ENCODE measurements at regions of chr19 and their contacts with region 1.

Region 1: GRCh38 chr19:17747205-17748098 is 3.8 kb upstream of the FCHO1 start:
- DNase-seq: peak; percentile 94 to 96 (median 94)
- H3K4me3 ChIP-seq: peak overlapping the region in 1 of 2 donors; percentile 59
- H3K4me3 Mint-ChIP-seq: peak overlapping the region; percentile 73 to 96 (median 94)
- H3K27ac ChIP-seq: peak overlapping the region; percentile 52
- H3K27ac Mint-ChIP-seq: peak overlapping the region; percentile 31 to 90 (median 74)
- H3K4me1 ChIP-seq: peaks cover 44% of the 10 kb centered on the region
- H3K4me1 Mint-ChIP-seq: peaks cover 28 to 56% (median 41%) of the 10 kb centered on the region in 4 donors
- H3K27me3 ChIP-seq: no peaks in the 10 kb centered on the region
- H3K27me3 Mint-ChIP-seq: no peaks in the 10 kb centered on the region

Region 2: DNA sequence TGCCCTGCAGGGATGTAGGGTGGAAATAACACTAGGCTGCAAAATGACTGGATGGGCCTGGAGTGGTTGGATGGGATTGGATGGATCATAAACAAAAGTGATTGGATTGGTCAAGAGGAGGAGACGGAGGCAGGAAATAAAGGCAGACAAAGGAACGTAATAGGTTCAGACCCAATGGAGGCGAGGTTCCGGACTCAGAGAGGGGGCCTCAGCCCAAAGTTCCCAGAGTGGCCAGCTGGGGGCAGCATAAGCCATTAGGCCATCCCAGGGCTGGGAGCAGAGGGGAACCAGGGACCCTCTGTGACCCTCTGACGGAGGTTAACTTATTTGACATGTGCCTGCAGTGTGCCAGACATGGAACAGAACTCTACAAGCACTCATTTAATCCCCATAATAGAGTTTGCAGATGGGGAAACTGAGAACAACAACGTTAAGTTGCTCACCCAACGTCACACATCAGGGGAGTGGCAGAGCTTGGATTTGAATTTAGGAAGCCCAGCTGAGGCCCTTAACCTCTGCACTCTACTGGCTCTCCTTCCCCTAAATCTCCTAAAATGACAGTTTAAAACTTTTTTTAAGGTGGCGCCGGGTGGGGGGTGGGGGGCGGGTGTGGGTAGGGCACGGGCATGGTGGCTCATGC is 43.5 kb before region 1 on chr19:
- CTCF ChIA-PET with region 1: interaction called, 11 read pairs
- POLR2A ChIA-PET with region 1: no interaction called
- intact Hi-C with region 1: no loop called
- DNase-seq: peak; percentile 62 to 71 (median 66)
- H3K4me3 ChIP-seq: no peak overlapping the region
- H3K4me3 Mint-ChIP-seq: no peak overlapping the region
- H3K27ac ChIP-seq: no peak overlapping the region
- H3K27ac Mint-ChIP-seq: peak overlapping the region in 2 of 7 donors; percentile 5 to 78
- H3K4me1 ChIP-seq: no peaks in the 10 kb centered on the region
- H3K4me1 Mint-ChIP-seq: peaks cover 0 to 2% (median 0%) of the 10 kb centered on the region in 4 donors
- H3K27me3 ChIP-seq: no peaks in the 10 kb centered on the region
- H3K27me3 Mint-ChIP-seq: peaks cover 3 to 10% of the 10 kb centered on the region in 2 donors

Region 3: GRCh38 chr19:17766543-17767131 is 19.2 kb after region 1 on chr19:
- CTCF ChIA-PET with region 1: interaction called, 4 read pairs
- POLR2A ChIA-PET with region 1: interaction called, 10 read pairs
- intact Hi-C with region 1: no loop called
- DNase-seq: no peak
- H3K4me3 ChIP-seq: no peak overlapping the region
- H3K4me3 Mint-ChIP-seq: no peak overlapping the region
- H3K27ac ChIP-seq: no peak overlapping the region
- H3K27ac Mint-ChIP-seq: no peak overlapping the region
- H3K4me1 ChIP-seq: no peaks in the 10 kb centered on the region
- H3K4me1 Mint-ChIP-seq: peaks cover 0 to 5% (median 3%) of the 10 kb centered on the region in 4 donors
- H3K27me3 ChIP-seq: no peaks in the 10 kb centered on the region
- H3K27me3 Mint-ChIP-seq: no peaks in the 10 kb centered on the region

Region 4: DNA sequence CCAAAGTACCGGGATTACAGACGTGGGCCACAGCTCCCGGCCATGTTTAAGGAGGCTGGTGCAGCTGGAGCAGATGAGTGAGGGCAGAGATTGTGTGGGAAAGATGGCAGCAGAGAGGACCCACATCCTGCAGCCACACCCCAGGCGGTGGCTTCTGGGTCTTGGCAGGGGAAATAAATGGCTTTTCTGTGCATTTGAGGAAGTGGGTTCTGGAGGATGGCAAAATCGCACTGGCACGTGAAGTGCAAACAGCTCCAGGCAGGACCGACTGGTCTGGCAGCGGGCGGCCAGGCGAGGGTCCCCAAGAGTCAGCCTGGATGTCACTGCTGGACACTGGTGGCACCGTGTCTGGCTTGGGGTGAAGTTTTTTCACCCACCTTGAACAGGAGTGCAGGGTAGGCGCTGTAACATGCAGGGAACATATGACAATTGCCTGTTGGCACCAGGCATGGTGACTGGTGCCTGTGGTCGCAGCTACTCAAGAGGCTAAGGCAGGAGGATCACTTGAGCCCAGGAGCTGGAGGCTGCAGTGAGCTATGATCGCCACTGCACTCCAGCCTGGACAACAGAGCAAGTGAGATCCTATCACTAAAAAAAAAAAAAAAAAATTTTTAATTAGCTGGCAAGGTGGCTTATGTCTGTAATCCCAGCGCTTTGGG is 55.9 kb after region 1 on chr19:
- CTCF ChIA-PET with region 1: no interaction called
- POLR2A ChIA-PET with region 1: interaction called, 11 read pairs
- intact Hi-C with region 1: no loop called
- DNase-seq: peak; percentile 47 to 63 (median 57)
- H3K4me3 ChIP-seq: peak overlapping the region in 1 of 2 donors; percentile 28
- H3K4me3 Mint-ChIP-seq: peak overlapping the region; percentile 34 to 86 (median 78)
- H3K27ac ChIP-seq: no peak overlapping the region
- H3K27ac Mint-ChIP-seq: peak overlapping the region; percentile 80 to 94 (median 88)
- H3K4me1 ChIP-seq: peaks cover 43% of the 10 kb centered on the region
- H3K4me1 Mint-ChIP-seq: peaks cover 19 to 52% (median 32%) of the 10 kb centered on the region in 4 donors
- H3K27me3 ChIP-seq: no peaks in the 10 kb centered on the region
- H3K27me3 Mint-ChIP-seq: no peaks in the 10 kb centered on the region

Measured in CD4-positive, alpha-beta memory T cell (primary cell).